ENCODE measurements at regions of chr1 and their contacts with region 1.

Region 1: DNA sequence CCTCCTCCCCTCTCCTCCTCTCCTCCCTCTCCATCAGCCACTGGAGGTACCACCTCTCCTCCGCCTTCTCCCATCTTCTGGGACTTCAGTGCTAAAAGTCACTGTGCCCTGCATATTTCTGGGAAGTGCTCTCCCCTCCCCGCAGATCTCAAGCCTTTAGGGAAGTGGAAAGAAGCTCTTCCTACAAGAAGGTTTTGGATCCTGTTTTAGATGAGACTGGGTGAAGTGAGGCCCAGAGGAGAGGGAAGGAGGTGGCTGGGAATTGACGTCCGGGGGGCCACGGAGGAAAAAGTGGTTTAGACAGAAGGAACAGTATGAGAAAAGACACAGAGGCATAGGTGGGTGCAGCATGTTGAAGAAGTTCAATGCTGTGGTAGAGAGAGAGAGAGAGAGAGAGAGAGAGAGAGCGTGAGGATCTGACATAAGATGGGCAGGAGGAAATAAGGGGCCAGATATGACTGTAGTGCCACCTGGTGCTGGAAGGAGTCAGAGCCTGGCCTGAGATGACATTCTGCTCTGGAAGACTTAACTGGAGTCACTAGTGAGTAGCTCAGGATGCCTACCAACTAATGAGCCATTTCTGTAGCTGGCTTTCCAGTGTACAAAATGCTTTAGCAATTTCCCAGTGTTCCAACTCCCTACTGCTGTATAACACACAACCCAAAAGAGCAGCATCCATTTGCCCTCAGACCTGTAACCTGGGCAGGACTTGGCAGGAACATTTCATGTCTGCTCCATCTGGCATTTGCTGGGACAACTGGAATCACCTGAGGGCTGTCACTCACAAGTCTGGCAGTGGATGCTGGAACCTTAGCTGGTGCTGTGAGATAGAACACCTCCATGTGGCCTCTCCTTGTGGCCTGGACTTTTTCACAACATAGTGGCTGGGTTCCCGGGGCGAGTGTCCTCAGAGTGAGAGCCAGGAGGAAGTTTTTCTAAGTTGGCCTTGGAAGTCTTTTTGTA is 16.6 kb upstream of the ZSCAN20 start:
- DNase-seq: peak; percentile 62
- ATAC-seq: peak; percentile 87
- H3K4me3 Mint-ChIP-seq: no peak overlapping the region
- H3K27ac Mint-ChIP-seq: no peak overlapping the region
- H3K4me1 Mint-ChIP-seq: peaks cover 3% of the 10 kb centered on the region
- H3K27me3 Mint-ChIP-seq: peaks cover 6% of the 10 kb centered on the region

Region 2: GRCh38 chr1:33111970-33112369 is 343.9 kb before region 1 on chr1:
- CTCF ChIA-PET with region 1: no interaction called
- POLR2A ChIA-PET with region 1: no interaction called
- intact Hi-C with region 1: loop called in 1 of 2 experiments (anchors 5 kb)
- DNase-seq: no peak
- ATAC-seq: peak; percentile 70
- H3K4me3 Mint-ChIP-seq: no peak overlapping the region
- H3K27ac Mint-ChIP-seq: no peak overlapping the region
- H3K4me1 Mint-ChIP-seq: no peaks in the 10 kb centered on the region
- H3K27me3 Mint-ChIP-seq: no peaks in the 10 kb centered on the region